ENCODE measurements at regions of chr12 and their contacts with region 1.

Region 1: DNA sequence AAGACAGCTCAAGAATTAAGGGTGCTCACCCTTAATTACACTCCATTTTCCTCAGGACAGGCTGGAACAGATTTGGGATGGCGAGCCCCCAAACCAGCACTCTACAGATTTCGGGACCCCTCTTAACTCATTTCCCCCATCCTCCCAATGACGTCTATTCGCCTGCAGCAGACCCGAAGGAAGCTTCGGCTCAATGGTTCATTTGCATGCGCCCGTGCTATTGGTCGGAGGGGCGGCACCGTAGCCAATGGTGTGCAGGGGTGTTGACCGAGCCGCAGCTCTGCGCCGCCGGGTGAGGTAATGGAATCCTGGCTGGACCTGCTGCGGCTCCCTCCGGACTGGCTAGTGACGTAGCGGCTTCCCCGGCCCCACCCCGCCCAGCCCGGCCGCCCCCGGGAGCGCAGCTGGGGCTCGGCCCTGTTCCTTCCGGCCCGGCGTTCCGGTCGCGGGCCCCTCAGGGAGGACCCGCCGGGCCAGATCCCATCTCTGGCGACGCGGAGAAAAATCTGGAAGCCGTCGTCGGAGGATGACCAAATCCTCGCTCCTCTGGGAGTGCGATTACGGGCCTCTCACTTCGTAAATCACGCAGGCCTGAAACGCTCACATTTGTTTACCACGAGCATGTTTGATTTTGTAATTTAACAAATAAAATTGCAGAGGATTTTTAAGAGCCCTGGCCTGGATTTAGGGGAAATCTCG is 18.3 kb upstream of the NR4A1 start:
- DNase-seq: peak; percentile 98 to 99
- ATAC-seq: peak; percentile 85
- H3K4me3 ChIP-seq: peak overlapping the region; percentile 44 to 53 (median 48)
- H3K27ac ChIP-seq: peak overlapping the region; percentile 91 to 95 (median 92)
- H3K4me1 ChIP-seq: peaks cover 45 to 62% of the 10 kb centered on the region in 2 donors
- H3K27me3 ChIP-seq: no peaks in the 10 kb centered on the region
- CTCF ChIP-seq: no peak
- POLR2A ChIP-seq: peak; percentile 86 to 96

Region 2: DNA sequence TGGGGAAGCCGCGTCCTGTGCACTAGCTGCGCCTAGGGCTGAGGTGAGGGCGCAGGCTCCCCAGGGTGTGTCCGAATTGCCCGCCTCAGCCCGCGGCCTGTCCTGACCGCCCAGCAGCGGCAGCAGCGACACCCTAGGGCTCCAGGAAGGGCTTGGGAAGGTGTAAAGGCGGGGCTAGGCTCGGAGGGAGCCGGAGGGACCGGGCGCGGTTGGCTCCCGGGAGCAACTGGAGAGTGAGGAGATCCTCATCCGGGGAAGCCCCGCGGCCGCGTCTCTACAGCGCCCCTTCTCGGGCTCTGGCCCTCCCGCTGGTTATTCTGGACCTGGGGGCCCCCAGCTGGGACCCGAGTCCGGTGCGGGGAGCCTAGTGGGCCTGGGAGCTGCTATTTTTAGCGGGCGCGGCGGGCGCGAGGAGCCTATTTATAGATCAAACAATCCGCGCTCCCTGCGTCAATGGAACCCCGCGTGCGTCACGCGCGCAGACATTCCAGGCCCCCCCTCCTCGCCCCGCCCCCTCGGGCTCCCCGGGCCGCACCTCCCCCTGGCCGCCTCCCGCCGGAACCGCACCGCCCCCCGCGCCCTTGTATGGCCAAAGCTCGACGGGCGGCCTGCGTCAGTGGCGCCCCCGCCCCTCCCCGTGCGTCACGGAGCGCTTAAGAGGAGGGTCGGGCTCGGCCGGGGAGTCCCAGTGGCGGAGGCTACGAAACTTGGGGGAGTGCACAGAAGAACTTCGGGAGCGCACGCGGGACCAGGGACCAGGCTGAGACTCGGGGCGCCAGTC is 18.0 kb after region 1 on chr12 and contains the start of gene NR4A1:
- in situ Hi-C with region 1: no loop called
- intact Hi-C with region 1: loop called (anchors 1 kb)
- DNase-seq: peak; percentile 97 to 98
- ATAC-seq: peak; percentile 71 to 72
- H3K4me3 ChIP-seq: peak within 1 kb of the TSS; percentile 50 to 81 (median 68)
- H3K27ac ChIP-seq: peak within 1 kb of the TSS; percentile 90 to 98 (median 94)
- H3K4me1 ChIP-seq: peaks cover 41 to 47% of the 10 kb centered on the region in 2 donors
- H3K27me3 ChIP-seq: no peaks in the 10 kb centered on the region
- CTCF ChIP-seq: peak in 2 of 5 experiments; percentile 3 to 41
- POLR2A ChIP-seq: peak; percentile 94 to 98
- total RNA-seq, gene NR4A1: 36.3 to 248 (median 90.1) TPM

Region 3: DNA sequence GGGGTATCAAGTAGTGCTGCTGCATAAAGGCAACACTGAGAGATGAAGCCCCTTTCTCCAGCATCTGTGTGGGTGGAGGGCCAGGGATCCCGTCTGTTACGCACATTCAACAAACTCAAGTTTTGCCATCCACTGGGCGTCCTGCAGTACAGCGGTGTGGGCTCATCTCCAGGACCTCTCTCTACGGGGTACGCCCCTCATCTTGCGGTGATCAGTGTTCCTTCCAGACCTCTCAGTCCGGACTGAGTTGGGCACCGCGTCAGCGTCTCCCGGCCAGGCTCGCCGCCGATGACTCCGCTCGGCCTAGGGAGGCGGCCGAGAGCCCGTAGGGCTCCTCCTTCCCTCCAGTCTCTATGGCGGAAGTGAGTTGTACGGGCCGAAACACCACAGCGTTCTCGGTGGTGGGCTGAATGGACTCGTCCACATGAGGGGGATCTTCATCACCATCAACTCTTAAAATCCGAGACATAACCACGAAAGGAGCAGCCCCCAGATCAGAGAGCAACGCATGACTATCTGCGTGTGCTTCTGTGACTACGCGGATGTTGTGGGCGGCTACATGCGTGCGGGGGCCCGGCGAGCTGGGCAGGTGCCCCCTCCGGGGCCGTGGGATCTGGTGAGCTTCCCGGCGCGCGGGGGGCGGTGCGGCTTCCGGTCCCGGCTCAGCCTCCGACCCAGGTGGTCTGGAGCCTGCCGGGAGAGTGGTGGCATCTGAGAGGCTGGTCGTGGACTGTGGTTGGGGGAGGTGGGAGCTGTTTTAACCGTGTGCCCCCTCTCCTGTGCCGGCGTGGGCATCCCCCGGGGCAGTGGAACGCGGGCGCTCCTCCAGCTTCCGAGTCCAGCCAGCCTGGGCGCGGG is 36.6 kb after region 1 on chr12 and contains the start of gene ATG101:
- in situ Hi-C with region 1: no loop called
- intact Hi-C with region 1: loop called (anchors 2 kb)
- DNase-seq: peak; percentile 90 to 91
- ATAC-seq: peak; percentile 98 to 99
- H3K4me3 ChIP-seq: peak within 1 kb of the TSS; percentile 84 to 97 (median 96)
- H3K27ac ChIP-seq: peak within 1 kb of the TSS; percentile 89 to 96 (median 93)
- H3K4me1 ChIP-seq: peaks cover 26 to 30% of the 10 kb centered on the region in 2 donors
- H3K27me3 ChIP-seq: no peaks in the 10 kb centered on the region
- CTCF ChIP-seq: peak; percentile 45 to 70 (median 56)
- POLR2A ChIP-seq: peak; percentile 83 to 91
- total RNA-seq, gene ATG101: 23.3 to 49.4 (median 37.3) TPM

Region 4: DNA sequence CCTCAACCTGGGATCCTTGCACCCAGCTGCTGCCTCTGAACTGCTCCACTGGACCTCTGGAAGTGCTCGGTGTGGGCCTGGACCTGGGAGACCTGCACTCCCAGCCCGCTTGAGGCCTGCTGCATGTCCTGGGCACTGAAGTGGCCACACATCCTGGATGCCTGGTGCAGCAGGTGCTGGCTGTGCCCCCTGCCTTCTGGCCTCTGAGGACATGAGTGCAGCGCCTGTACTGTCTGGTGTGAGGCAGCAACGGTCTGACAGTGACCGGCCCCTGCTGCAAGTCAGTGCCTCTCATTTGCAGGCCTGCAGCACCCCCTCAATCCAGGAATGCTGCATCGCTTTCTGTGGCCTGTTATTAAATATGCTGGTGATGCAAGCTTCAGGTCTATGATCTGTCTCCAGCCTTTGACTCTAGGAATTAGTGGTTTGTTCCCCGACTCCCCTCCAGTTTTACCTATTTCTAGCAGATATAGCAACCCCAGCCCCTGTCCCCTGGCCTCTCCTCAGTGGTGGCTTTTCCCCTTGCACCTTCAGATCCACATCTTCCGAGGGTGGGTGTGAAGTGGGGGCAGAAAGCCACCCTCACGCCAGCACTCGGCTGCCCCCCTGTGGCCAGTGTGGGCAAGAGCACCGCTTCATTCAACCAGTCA is 50.2 kb after region 1 on chr12:
- in situ Hi-C with region 1: loop called (anchors 5 to 10 kb)
- intact Hi-C with region 1: no loop called
- DNase-seq: peak in 1 of 2 donors; percentile 48
- ATAC-seq: peak; percentile 22 to 32
- H3K4me3 ChIP-seq: no peak overlapping the region
- H3K27ac ChIP-seq: peak overlapping the region; percentile 56 to 77 (median 67)
- H3K4me1 ChIP-seq: peaks cover 52 to 62% of the 10 kb centered on the region in 2 donors
- H3K27me3 ChIP-seq: no peaks in the 10 kb centered on the region
- CTCF ChIP-seq: peak; percentile 94 to 98 (median 96)
- POLR2A ChIP-seq: no peak

Measured in gastrocnemius medialis (tissue), 4 donors.